Activated CD4-positive, alpha-beta T cell treated with anti-CD3 and anti-CD28 coated beads, Interleukin-2, amount 10 ng/mL, durations not matched to agents 24 days and 14 days (primary cell): ENCODE measurements at regions of chr1 and their contacts with region 1.

Region 1: DNA sequence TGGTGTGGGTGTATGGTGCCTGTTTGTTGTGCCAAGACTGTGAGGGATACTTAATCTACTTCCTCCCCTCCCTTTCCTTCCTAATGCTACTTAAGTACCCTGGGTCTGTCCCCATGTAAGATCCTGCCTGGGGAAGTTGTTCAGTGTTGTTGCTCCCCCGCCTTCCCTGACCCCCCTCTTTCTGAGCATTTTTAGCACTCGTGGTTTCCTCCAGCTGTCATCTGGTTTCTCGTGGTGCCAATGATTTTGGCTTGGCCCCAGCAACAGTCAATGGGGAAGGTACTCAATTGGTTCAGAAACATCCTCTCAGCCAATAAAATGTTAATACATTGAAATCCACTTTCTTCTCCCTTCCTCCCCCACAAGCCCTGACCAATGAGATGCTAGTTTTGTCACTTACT is 8.0 kb upstream of the B4GALT3 start:
- DNase-seq: peak; percentile 94
- H3K4me3 Mint-ChIP-seq: peak overlapping the region; percentile 75
- H3K27ac Mint-ChIP-seq: peak overlapping the region; percentile 96
- H3K4me1 Mint-ChIP-seq: peaks cover 69% of the 10 kb centered on the region
- H3K27me3 Mint-ChIP-seq: no peaks in the 10 kb centered on the region

Region 2: GRCh38 chr1:161201828-161202725 is 16.8 kb after region 1 on chr1 and contains the start of gene NDUFS2:
- intact Hi-C with region 1: loop called (anchors 2 kb)
- DNase-seq: peak; percentile 98
- H3K4me3 Mint-ChIP-seq: peak within 1 kb of the TSS; percentile 94
- H3K27ac Mint-ChIP-seq: peak within 1 kb of the TSS; percentile 96
- H3K4me1 Mint-ChIP-seq: peaks cover 61% of the 10 kb centered on the region
- H3K27me3 Mint-ChIP-seq: no peaks in the 10 kb centered on the region
- total RNA-seq, gene NDUFS2: 88.4 and 89.6 TPM in 2 replicates

Region 3: DNA sequence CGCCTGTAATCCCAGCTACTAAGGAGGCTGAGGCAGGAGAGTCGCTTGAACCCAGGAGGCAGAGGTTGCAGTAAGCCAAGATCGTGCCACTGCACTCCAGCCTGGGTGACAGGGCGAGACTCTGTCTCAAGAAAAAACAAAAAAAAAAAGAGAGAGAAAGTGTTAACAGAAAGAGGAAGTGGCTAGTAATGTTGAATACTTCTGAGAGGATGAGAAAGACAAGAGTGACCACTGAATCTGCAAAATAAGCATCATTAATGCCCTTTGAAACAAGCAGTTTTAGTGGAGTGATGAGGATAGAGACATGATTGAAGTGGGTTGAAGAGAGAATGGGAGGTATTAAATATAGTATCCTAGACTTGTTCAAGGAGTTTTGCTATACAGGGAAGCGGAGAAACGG is 112.8 kb after region 1 on chr1:
- intact Hi-C with region 1: no loop called
- DNase-seq: no peak
- H3K4me3 Mint-ChIP-seq: no peak overlapping the region
- H3K27ac Mint-ChIP-seq: no peak overlapping the region
- H3K4me1 Mint-ChIP-seq: peaks cover 3% of the 10 kb centered on the region
- H3K27me3 Mint-ChIP-seq: no peaks in the 10 kb centered on the region